ENCODE measurements at regions of chr14 and their contacts with region 1.

Region 1: DNA sequence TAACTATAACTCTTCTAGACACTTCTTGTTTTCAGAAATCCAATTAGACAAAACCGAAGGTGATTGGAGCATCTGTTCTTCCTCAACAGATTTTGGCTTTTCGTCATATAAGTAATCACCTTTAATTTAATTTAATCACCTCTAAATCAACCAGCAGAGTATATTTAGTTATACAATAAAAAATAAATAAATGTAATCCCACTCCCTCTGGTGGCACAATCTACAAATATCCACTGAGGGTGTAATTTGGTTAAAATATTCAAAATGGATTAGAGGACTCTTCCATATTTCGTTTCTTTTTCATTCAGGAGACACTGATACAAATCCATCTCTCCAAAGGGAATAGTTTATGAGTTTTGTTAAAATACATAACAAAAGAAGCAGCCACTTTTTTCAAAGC is 18.3 kb upstream of the SLC35F4 start:
- DNase-seq: no peak
- H3K4me3 ChIP-seq: no peak overlapping the region
- H3K27me3 ChIP-seq: no peaks in the 10 kb centered on the region
- CTCF ChIP-seq: 0 out of 2 replicates have a peak, but pooled peaks have one; percentile 7

Region 2: GRCh38 chr14:56390859-56391258 is 1493.3 kb before region 1 on chr14:
- CTCF ChIA-PET with region 1: no interaction called
- POLR2A ChIA-PET with region 1: no interaction called
- DNase-seq: no peak
- H3K4me3 ChIP-seq: no peak overlapping the region
- H3K27me3 ChIP-seq: no peaks in the 10 kb centered on the region
- CTCF ChIP-seq: no peak

Region 3: GRCh38 chr14:57871459-57872080 is 12.6 kb before region 1 on chr14:
- CTCF ChIA-PET with region 1: interaction called, 12 read pairs
- POLR2A ChIA-PET with region 1: no interaction called
- DNase-seq: no peak
- H3K4me3 ChIP-seq: no peak overlapping the region
- H3K27me3 ChIP-seq: peaks cover 1% of the 10 kb centered on the region; the same call in 1 of the 2 replicates
- CTCF ChIP-seq: peak; percentile 70

Measured in BJ (cell line).